SK-MEL-5 (cell line): ENCODE measurements at regions of chr18 and their contacts with region 1.

Region 1: GRCh38 chr18:76450452-76451395 is 44.3 kb downstream of the ZNF516 start:
- DNase-seq: peak; percentile 42

Region 2: GRCh38 chr18:76546088-76546435 is 95.3 kb after region 1 on chr18:
- in situ Hi-C with region 1: no loop called
- DNase-seq: no peak

Region 3: DNA sequence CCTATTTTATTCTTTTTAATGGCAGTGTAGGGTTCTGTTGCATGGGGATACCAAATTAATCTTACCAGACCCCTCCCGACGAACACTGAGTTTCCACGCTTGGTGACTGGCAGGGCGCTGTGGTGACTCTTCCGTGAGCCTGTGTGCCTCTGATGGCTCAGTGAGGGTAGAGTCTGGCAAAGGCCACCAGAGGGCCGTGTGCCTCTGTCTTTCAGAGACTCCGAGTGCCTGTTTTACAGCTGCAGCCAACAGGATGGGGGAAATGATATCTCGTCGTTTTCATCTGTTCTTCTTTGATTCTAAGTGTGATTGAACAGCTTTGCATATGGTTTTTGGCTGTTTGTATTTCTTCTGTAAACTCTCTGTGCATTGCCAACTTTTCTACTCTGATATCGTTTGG is 471.4 kb after region 1 on chr18:
- in situ Hi-C with region 1: loop called (anchors 25 kb)
- DNase-seq: peak; percentile 75